ENCODE measurements at regions of chr18 and their contacts with region 1.

Region 1: GRCh38 chr18:68177807-68178702 is 536.9 kb downstream of the TMX3 start:
- DNase-seq: no peak
- H3K4me3 ChIP-seq: no peak overlapping the region
- H3K27ac ChIP-seq: no peak overlapping the region
- H3K27me3 ChIP-seq: no peaks in the 10 kb centered on the region
- CTCF ChIP-seq: no peak

Region 2: GRCh38 chr18:68024716-68025115 is 153.3 kb before region 1 on chr18:
- intact Hi-C with region 1: no loop called
- DNase-seq: no peak
- H3K4me3 ChIP-seq: no peak overlapping the region
- H3K27ac ChIP-seq: no peak overlapping the region
- H3K27me3 ChIP-seq: no peaks in the 10 kb centered on the region
- CTCF ChIP-seq: no peak

Region 3: GRCh38 chr18:68229351-68229750 is 51.3 kb after region 1 on chr18:
- intact Hi-C with region 1: loop called in 1 of 2 experiments (anchors 2 kb)
- DNase-seq: no peak
- H3K4me3 ChIP-seq: no peak overlapping the region
- H3K27ac ChIP-seq: no peak overlapping the region
- H3K27me3 ChIP-seq: peaks cover 0 to 5% (median 0%) of the 10 kb centered on the region in 45 donors
- CTCF ChIP-seq: no peak

Measured in dorsolateral prefrontal cortex (tissue), 120 donors.